ENCODE measurements at regions of chr9 and their contacts with region 1.

Region 1: GRCh38 chr9:35945341-35946018 is 12.5 kb downstream of the OR2S2 start:
- DNase-seq: peak; percentile 65
- CTCF ChIP-seq: peak; percentile 85

Region 2: GRCh38 chr9:35871497-35871896 is 74.0 kb before region 1 on chr9:
- CTCF ChIA-PET with region 1: no interaction called
- POLR2A ChIA-PET with region 1: no interaction called
- DNase-seq: no peak
- CTCF ChIP-seq: no peak

Region 3: GRCh38 chr9:35903049-35903448 is 42.4 kb before region 1 on chr9:
- CTCF ChIA-PET with region 1: interaction called, 22 read pairs
- POLR2A ChIA-PET with region 1: no interaction called
- DNase-seq: peak; percentile 74
- CTCF ChIP-seq: peak; percentile 74

Region 4: DNA sequence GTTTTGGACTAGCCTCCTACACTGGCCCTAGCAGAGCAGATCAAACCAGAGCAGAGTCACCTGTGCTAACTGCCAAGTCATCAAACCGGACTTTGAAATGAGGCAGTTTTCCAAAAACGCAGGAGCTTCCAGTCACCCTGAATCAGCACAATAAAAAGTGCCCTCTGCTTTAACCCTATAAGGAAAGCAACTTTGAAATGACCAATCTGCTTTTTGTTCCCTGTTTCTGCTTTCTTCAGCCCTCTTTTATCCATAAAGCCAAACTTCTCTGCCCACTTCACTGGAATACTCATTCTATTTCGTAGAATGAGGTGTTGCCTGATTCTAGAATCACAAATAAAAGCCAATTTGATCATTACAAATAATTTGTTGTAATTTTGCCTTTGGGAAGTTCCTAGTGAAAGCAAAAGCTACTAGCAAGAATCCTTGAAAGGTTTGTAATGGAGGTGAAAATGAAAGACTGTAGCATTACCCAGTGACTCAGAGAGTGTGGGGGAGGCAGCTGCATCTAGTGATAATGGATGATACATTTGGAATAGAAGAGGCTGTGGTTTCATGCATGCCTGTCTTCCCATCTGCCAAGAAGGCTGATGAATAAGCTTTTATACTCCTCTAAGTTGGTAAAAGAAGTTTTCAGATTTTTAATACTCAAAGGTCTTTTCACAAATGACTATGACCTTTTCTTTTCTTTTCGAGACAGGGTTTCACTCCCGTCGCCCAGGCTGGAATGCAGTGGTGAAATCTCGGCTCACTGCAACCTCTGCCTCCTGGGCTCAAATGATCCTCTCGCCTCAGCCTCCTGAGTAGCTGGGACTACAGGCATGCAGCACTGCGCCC is 21.3 kb before region 1 on chr9:
- CTCF ChIA-PET with region 1: interaction called, 11 read pairs
- POLR2A ChIA-PET with region 1: no interaction called
- DNase-seq: no peak
- CTCF ChIP-seq: no peak

Region 5: GRCh38 chr9:35960039-35960655 is 14.7 kb after region 1 on chr9:
- CTCF ChIA-PET with region 1: interaction called, 33 read pairs
- POLR2A ChIA-PET with region 1: no interaction called
- DNase-seq: no peak
- CTCF ChIP-seq: no peak

Region 6: DNA sequence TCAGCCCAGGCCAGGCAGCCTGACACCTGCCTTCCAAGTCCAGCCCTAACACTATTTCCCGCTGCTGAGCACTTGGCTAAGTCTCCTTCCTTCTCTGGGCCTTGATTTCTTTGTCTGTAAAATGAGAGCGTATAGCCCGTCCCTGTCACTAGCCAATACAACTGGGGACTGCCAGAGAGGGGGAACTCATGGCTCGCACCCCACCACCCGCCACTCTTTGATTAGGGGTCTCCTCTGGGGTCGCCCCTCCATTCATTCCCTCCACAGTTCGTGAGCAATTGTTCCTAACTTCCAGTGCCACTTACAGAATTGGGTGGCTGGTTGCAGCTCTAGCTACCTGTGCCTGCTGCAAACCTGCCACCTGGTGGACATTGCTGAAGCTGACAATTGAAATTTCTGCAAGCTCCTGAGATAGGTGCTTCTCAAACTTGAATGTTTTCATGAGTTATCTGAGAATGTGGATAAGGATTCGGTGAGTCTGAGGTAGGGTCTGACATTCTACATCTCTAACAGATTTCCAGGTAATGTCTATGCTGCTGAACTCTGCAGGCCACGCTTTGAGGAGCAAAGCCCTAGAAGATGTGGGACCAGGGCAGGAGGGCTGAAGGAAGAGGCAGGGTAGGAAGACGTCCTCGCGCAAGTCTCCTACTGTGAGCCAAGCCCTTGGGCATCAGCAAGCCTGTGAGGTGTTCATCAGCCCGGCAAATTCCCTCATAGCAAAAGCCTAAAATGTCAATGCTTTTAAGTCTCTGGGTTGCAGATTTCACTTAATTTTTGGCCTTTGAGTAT is 78.0 kb after region 1 on chr9:
- CTCF ChIA-PET with region 1: interaction called, 13 read pairs
- POLR2A ChIA-PET with region 1: no interaction called
- DNase-seq: peak; percentile 72
- CTCF ChIP-seq: peak; percentile 84

Measured in GM10248 (cell line).